ENCODE measurements at regions of chr6 and their contacts with region 1.

Region 1: GRCh38 chr6:150783813-150784212 is 81.7 kb upstream of the MTHFD1L start:
- DNase-seq: no peak
- H3K4me3 ChIP-seq: no peak overlapping the region
- H3K4me3 Mint-ChIP-seq: no peak overlapping the region
- H3K27ac Mint-ChIP-seq: no peak overlapping the region
- H3K4me1 ChIP-seq: no peaks in the 10 kb centered on the region
- H3K4me1 Mint-ChIP-seq: no peaks in the 10 kb centered on the region
- H3K27me3 ChIP-seq: no peaks in the 10 kb centered on the region
- H3K27me3 Mint-ChIP-seq: no peaks in the 10 kb centered on the region
- CTCF ChIP-seq: no peak

Region 2: DNA sequence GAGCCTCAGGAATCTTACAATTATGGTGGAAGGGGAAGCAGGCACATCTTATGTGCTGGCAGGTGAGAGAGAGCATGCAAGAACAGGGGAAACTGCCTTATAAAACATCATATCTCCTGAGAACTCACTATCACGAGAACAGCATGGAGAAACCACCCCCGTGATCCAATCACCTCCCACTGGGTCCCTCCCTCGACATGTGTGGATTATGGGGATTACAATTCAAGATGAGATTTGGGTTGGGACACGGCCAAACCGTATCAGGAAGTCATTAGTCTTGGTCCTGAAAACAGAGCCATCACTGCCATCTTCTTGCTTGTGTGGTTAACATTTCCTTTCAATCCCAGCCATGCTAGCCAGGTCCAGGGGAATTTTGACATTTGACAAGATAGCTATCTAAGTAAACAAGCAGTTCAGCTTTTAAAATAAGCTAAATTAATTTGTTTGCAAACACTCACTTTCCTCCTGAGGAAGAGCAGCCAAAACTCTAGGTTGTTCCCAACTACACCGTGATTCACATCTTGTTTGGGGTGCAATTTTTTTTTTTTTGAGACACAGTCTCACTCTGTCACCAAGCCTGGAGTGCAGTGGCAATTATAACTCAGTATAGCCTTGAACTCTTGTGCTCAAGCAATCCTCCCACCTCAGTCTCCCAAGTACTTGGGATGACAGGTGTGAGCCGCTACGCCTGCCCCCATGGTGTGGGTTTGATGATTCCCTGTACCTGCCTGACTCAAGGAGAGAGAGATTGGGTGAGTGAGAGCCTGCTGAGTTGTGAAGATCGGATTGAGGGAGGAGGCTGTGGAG is 654.0 kb before region 1 on chr6:
- CTCF ChIA-PET with region 1: no interaction called
- POLR2A ChIA-PET with region 1: no interaction called
- intact Hi-C with region 1: no loop called
- DNase-seq: no peak
- H3K4me3 ChIP-seq: no peak overlapping the region
- H3K4me3 Mint-ChIP-seq: no peak overlapping the region
- H3K27ac Mint-ChIP-seq: no peak overlapping the region
- H3K4me1 ChIP-seq: no peaks in the 10 kb centered on the region
- H3K4me1 Mint-ChIP-seq: no peaks in the 10 kb centered on the region
- H3K27me3 ChIP-seq: no peaks in the 10 kb centered on the region
- H3K27me3 Mint-ChIP-seq: no peaks in the 10 kb centered on the region
- CTCF ChIP-seq: no peak

Region 3: DNA sequence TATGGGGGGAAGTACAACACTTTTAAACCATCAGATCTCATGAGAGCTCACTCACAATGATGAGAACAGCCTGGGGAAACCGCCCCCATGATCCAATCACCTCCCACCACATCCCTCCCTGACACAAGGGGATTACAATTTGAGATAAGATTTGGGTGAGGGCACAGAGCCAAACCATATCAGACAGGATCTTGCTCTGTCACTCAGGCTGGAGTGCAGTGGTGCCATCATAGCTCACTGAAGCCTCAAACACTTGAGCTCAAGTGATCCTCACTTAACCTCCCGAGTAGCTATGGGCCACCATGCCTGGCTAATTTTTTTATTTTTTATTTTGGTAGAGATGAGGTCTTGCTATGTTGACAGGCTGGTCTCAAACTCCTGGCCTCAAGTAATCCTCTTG is 420.1 kb before region 1 on chr6:
- CTCF ChIA-PET with region 1: no interaction called
- POLR2A ChIA-PET with region 1: interaction called, 10 read pairs
- intact Hi-C with region 1: no loop called
- DNase-seq: no peak
- H3K4me3 ChIP-seq: no peak overlapping the region
- H3K4me3 Mint-ChIP-seq: no peak overlapping the region
- H3K27ac Mint-ChIP-seq: no peak overlapping the region
- H3K4me1 ChIP-seq: peaks cover 8% of the 10 kb centered on the region
- H3K4me1 Mint-ChIP-seq: no peaks in the 10 kb centered on the region
- H3K27me3 ChIP-seq: no peaks in the 10 kb centered on the region
- H3K27me3 Mint-ChIP-seq: no peaks in the 10 kb centered on the region
- CTCF ChIP-seq: no peak

Region 4: DNA sequence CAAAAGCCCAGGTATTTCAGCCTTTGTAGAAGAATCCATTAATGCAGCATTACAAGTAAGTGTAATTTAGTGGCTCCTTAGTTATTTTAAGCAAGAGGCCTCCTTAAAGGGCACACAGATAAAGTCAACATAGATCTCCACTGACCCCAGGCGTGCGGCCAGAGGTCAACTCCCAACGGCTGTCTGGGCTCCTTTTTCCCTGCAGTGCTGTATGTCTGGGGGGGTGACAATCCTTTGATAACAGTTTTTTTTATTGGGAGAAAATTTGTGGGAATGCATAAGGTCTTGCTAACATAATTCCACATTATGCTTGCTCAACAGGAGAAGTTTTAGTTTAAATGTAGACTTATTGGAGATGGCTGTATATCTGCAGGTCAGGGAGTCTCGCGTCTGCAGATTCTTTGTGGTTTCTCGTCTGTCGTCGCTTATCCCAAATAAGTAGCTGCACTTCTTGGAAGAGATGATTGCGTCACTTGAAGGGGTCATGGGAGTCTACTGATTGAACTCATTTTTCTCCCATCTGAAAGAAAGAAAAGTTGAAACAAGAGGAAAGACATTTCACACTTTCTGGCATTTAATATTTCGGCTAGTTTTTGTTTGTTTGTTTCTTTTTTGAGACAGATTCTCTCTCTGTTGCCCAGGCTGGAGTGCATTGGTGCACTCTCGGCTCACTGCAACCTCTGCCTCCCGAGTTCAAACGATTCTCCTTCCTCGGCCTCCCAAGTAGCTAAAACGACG is 304.2 kb after region 1 on chr6:
- CTCF ChIA-PET with region 1: no interaction called
- POLR2A ChIA-PET with region 1: no interaction called
- intact Hi-C with region 1: no loop called
- DNase-seq: peak; percentile 15 to 39
- H3K4me3 ChIP-seq: no peak overlapping the region
- H3K4me3 Mint-ChIP-seq: no peak overlapping the region
- H3K27ac Mint-ChIP-seq: no peak overlapping the region
- H3K4me1 ChIP-seq: peaks cover 10% of the 10 kb centered on the region
- H3K4me1 Mint-ChIP-seq: peaks cover 6% of the 10 kb centered on the region
- H3K27me3 ChIP-seq: no peaks in the 10 kb centered on the region
- H3K27me3 Mint-ChIP-seq: no peaks in the 10 kb centered on the region
- CTCF ChIP-seq: no peak